Psoas muscle (tissue), 8 donors: ENCODE measurements at regions of chr13 and their contacts with region 1.

Region 1: DNA sequence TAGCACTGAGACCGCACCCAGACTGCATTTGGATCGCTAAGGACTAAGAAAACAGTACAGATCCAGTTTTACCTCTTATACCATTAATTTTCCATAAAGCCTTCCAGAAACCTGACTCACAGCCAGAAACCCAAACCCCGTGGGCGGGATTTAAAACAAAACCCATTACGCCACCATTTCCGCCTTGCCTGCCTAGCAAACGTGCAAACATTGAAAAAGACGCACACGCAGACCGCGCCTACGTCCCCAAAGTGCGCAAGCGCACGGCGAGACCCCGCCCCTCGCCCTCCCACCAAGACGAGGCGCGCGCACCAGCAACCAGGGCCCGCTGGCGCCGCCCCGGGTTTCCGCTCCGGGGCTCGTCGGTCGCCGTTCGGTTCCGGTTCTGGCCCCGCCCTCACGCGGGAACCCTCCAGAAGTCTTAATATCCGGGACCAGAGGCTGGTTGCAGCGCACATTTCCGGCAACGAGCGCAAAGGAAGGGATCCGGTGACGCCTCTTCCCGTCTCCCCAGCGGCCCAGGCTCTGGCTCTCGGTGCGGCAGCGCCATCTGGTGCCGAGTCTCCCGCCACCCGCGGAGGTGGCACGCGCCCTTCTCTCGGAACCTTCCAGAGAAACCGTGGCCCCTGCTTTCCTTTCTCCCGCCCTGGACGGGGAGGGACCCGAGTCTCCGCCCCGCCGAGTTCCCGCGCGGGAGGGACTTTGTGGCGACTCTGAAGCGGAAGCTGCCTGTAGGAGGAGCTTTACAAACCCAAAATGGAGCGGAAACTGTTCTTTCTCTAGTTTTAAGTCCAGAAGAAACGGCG is 256.9 kb upstream of the STARD13 start:
- DNase-seq: peak; percentile 99
- ATAC-seq: peak; percentile 93 to 97 (median 94)
- H3K4me3 ChIP-seq: peak overlapping the region; percentile 69
- H3K27ac ChIP-seq: peak overlapping the region; percentile 93
- H3K4me1 ChIP-seq: peaks cover 26% of the 10 kb centered on the region
- H3K27me3 ChIP-seq: no peaks in the 10 kb centered on the region
- CTCF ChIP-seq: peak; percentile 82

Region 2: DNA sequence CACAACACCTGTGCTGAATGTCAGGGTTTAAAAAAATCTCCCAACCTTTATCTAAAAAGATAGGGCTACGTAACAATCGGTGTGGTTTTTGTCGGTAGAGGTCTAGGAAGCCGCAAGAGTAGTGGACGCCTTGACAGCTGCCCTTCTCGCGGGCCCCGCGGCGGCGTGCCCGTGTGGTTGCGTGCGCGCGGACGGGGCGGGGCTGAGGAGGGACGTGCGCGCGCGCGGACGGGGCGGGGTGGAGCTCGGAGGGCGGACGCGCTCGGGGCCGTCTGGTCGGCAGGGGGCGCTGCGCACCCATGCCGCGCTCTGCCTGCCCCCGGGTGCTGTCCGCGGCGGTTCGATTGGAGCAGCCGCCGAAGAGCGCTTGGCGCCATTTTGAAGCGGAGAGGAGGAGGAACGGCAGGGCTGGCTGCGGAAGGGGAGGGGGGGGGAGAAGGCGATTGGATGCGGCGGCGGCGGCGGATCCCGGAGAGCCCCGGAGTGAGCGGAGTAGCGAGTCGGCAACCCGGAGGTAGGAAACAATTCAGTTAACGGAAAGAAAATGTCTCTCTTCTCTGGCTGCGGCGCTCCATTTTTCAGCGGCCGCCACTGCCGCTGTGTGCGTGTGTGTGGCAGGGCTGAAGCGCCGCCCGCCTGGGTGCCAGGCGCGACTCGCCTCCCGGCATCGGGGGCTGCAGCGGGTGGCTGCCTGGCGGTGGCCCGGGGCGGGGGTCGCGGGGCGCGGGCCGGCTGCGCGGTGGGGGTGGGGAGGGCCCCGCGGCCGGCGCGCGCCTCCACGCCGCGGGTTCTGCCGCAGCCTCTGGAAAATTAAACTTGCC is 956.2 kb before region 1 on chr13 and contains the start of gene PDS5B:
- intact Hi-C with region 1: loop called in 1 of 2 experiments (anchors 5 kb)
- DNase-seq: peak; percentile 95 to 98
- ATAC-seq: peak; percentile 93 to 99 (median 98)
- H3K4me3 ChIP-seq: peak within 1 kb of the TSS; percentile 89
- H3K27ac ChIP-seq: peak within 1 kb of the TSS; percentile 94
- H3K4me1 ChIP-seq: peaks cover 31% of the 10 kb centered on the region
- H3K27me3 ChIP-seq: no peaks in the 10 kb centered on the region
- CTCF ChIP-seq: peak; percentile 96
- total RNA-seq, gene PDS5B: 18.3 to 28.1 (median 22.1) TPM

Region 3: DNA sequence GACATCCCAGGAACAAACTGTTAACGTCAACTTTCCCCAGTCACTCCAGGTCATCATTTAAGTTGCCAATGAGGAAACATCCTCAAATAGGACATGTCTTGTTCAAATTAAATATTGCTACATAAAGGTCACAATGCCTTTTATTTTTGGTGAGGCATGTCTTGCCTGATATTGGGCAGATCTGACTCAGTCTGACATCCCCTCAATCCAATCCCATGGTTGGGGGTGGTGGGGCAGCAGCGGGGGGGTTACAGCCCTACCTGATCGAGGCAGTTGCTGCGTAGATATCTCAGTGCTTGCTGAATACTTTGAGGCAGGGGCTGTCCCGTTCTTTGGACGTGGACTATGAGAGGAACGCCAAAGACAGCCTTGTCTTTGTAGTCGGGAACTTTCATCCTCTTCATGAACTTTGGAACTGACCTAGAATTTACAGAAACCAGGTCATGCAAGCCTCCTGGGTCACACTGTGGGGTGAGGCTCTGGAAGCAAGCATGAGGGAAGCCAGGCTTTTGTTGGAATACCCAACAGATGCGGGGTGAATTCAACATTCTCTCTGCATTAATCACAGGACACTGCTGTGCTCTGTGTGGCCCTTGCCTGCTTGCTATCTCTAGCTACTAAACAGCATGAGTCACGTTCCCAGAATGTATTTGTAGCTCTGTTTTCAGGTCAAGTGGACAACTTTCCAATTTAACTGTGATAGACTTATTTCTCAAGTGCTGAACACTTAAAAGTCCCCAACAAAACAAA is 416.5 kb before region 1 on chr13:
- intact Hi-C with region 1: loop called (anchors 5 to 10 kb)
- DNase-seq: peak; percentile 60 to 80
- ATAC-seq: peak; percentile 91 to 96 (median 94)
- H3K4me3 ChIP-seq: peak overlapping the region; percentile 31
- H3K27ac ChIP-seq: peak overlapping the region; percentile 83
- H3K4me1 ChIP-seq: peaks cover 33% of the 10 kb centered on the region
- H3K27me3 ChIP-seq: no peaks in the 10 kb centered on the region
- CTCF ChIP-seq: no peak

Region 4: GRCh38 chr13:33228648-33229445 is 313.6 kb before region 1 on chr13:
- intact Hi-C with region 1: loop called (anchors 10 kb)
- DNase-seq: no peak
- ATAC-seq: peak; percentile 58 to 90 (median 70)
- H3K4me3 ChIP-seq: no peak overlapping the region
- H3K27ac ChIP-seq: no peak overlapping the region
- H3K4me1 ChIP-seq: peaks cover 14% of the 10 kb centered on the region
- H3K27me3 ChIP-seq: no peaks in the 10 kb centered on the region
- CTCF ChIP-seq: peak; percentile 94

Region 5: DNA sequence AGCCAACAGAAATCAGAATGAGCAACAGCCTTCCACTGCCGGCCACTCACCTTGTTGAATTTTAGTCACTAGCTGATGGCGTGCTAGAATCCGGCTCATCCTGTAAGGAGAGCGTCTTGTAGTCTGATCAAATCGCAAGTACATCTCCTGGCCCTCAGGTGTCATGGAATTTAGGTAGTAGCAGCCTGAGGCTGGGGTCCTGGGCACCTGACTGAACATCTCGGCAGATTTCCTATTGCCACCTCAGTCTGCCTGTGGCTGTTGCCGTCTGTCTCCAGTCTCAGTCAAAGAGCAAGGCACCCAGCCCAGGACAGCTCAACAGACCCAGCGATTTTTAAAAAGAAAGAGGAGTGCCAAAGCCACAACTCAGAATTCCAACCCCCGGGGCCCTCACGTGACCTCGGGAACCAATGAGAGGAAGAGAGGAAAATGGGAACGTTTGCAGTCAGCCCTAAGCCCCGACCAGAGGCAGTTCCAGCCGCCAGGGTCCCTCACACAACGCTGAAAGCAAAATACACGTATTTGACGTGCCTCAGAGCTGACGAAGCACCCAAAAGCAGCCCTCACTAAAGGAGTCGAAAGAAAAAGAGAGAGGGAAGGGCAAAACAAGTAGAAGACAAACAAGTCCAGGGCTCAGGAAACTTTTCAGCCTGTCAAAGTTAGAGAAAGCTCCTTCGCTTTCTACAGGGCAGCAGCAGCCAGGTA is 256.9 kb before region 1 on chr13 and contains the start of gene STARD13:
- intact Hi-C with region 1: loop called in 1 of 2 experiments (anchors 5 kb)
- DNase-seq: peak; percentile 91 to 93
- ATAC-seq: peak; percentile 93 to 95 (median 95)
- H3K4me3 ChIP-seq: peak within 1 kb of the TSS; percentile 67
- H3K27ac ChIP-seq: peak within 1 kb of the TSS; percentile 88
- H3K4me1 ChIP-seq: peaks cover 31% of the 10 kb centered on the region
- H3K27me3 ChIP-seq: no peaks in the 10 kb centered on the region
- CTCF ChIP-seq: peak; percentile 33
- total RNA-seq, gene STARD13: 5.2 to 9.2 (median 7.1) TPM

Region 6: DNA sequence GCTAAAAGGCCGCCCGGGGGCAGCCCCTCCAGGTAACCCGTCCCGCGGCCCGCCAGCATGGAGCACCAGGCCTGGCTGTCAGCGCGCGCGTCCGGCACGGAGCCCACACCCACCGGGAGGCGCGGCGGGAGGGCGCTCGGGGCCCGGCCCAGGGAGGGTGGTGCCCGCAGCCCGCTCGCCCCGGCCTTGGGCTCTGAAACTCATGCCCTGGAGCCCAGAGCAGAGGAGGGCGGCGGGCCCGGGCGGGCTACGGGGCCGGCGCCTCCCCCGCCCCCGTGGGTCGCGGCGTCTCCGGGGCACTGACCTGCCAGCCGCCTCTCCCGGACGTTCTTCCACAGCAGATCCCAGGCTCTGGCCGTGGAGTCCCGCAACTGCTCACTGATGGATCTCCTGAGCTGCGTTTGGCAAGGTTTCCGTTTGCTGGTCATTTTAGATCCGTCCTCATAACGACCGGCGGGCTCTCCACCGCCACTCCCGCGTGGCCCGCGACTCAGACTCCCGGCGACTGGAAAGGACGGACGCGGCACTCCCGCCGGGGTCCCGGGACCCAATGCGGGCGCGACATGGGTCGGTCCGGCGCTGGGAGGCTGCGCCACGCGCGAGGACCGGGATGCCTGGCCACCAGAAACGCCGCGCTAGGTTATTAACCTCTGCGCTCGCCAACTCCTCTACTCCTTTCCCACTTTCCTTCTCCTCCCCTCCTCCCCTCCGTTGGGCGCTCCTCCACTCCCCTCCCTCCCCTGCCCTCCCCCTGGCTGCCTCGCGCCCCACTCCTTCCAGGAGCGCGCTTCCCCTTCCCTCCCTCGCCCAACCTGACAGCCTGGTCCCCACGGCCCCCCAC is 192.3 kb before region 1 on chr13:
- intact Hi-C with region 1: loop called in 1 of 2 experiments (anchors 5 kb)
- DNase-seq: peak; percentile 61 to 72
- ATAC-seq: peak; percentile 53 to 66 (median 64)
- H3K4me3 ChIP-seq: peak overlapping the region; percentile 84
- H3K27ac ChIP-seq: peak overlapping the region; percentile 70
- H3K4me1 ChIP-seq: peaks cover 19% of the 10 kb centered on the region
- H3K27me3 ChIP-seq: no peaks in the 10 kb centered on the region
- CTCF ChIP-seq: no peak

Region 7: DNA sequence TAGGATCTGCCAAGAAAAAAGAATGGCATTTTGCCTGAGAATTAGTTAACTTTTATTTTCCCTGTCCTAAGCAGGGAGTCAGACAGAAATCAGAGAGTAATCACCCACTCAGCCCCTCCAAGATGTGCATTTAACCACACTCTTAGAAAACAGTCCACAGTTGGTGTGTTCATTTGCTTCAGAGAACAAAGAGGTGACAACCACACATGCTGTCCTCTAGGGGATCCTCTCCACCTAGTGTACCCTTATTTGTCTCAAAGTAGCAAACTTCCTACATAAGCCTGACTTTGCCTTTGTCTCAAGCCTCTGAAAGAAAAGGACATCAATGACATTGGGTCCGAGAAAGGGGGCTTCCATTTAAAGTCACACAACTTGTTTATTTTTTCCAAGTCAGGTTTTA is 168.4 kb after region 1 on chr13:
- intact Hi-C with region 1: no loop called
- DNase-seq: no peak
- ATAC-seq: no peak
- H3K4me3 ChIP-seq: no peak overlapping the region
- H3K27ac ChIP-seq: no peak overlapping the region
- H3K4me1 ChIP-seq: no peaks in the 10 kb centered on the region
- H3K27me3 ChIP-seq: no peaks in the 10 kb centered on the region
- CTCF ChIP-seq: no peak

Region 8: DNA sequence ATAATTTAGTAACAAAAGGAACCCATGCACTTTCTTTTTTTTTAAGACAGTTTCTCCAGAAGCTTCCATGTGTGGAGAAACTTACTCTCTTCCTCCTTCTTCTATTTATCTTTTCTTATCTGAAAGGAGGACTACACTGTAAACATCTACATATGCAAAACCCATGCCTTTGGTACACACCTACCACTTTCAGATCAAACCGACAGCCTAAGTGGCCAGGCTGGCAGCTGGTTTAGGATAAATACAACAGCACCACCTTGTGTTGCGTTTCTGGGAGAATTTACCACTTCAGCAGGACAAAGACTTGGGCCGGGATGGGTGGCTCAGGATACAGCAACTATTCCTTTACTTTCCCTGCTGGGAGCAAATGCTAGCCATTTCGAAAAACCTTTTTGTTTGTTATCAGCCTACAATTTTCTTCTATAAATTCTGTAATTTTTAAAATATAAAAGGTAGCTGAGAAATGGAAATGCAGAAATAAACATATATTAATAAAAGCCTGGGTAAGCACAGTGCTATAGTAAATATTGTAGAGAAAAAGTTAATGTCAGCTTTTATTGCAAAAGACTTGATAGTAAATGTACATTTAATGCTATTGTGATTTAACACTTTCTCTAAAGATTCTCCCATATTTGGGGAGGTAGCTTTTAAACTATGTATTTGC is 181.4 kb after region 1 on chr13:
- intact Hi-C with region 1: loop called (anchors 2 to 10 kb)
- DNase-seq: peak; percentile 33 to 62
- ATAC-seq: peak; percentile 82 to 99 (median 95)
- H3K4me3 ChIP-seq: no peak overlapping the region
- H3K27ac ChIP-seq: no peak overlapping the region
- H3K4me1 ChIP-seq: peaks cover 10% of the 10 kb centered on the region
- H3K27me3 ChIP-seq: no peaks in the 10 kb centered on the region
- CTCF ChIP-seq: peak; percentile 78